Activated CD4-positive, alpha-beta T cell treated with anti-CD3 and anti-CD28 coated beads, Interleukin-2, amount 10 ng/mL, durations not matched to agents 24 days and 14 days (primary cell): ENCODE measurements at regions of chr14 and their contacts with region 1.

Region 1: DNA sequence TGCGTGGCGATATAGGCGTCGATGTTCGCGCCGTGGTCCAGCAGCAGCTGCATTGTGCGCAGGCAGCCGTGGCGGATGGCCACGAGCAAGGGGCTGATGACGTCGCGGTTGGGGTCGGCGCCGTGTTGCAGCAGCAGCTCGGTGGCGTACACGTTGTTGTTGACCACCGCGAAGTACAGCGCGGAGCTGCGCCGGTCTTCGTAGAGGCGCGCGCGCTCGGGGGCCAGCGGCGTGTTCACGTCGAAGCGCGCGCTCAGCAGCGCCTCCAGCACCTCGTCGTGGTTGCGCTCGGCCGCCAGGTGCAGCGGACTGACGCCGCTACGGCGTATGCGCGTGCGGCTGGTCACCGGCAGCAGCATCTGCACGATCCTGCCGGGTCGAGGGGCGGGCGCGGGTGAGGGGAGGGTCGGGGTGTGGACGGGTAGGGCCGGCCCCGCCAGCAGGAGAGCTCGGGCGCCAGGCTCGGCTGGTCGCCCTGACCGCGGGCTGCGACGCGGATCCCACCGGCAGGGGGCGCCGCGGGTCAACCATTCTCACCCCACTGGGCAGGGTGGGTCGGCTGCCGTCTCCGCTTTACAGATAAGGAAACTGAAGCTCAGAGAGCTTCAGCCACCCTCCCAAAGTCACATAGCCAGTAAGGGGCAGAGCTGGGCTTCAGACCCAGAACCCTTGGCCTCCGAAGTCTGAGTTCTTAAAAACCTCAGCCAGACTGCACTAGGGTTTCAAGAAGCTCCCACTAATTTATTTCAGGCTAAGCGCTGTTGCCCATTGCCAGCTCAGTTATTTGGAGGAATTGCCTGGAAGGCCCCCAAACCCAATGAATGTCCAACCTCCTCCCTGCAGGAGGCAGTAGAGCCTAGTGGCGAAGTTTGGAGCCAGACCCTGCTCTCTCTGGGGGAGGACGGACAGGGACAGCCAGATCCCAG is 12.4 kb downstream of the FAM181A start:
- DNase-seq: peak; percentile 98
- H3K4me3 Mint-ChIP-seq: peak overlapping the region; percentile 69
- H3K27ac Mint-ChIP-seq: peak overlapping the region; percentile 79
- H3K4me1 Mint-ChIP-seq: peaks cover 23% of the 10 kb centered on the region
- H3K27me3 Mint-ChIP-seq: no peaks in the 10 kb centered on the region

Region 2: GRCh38 chr14:93857500-93858283 is 81.9 kb before region 1 on chr14:
- intact Hi-C with region 1: no loop called
- DNase-seq: no peak
- H3K4me3 Mint-ChIP-seq: no peak overlapping the region
- H3K27ac Mint-ChIP-seq: no peak overlapping the region
- H3K4me1 Mint-ChIP-seq: no peaks in the 10 kb centered on the region
- H3K27me3 Mint-ChIP-seq: peaks cover 2% of the 10 kb centered on the region

Region 3: GRCh38 chr14:93951635-93952540 is 12.3 kb after region 1 on chr14:
- intact Hi-C with region 1: loop called (anchors 1 kb)
- DNase-seq: no peak
- H3K4me3 Mint-ChIP-seq: no peak overlapping the region
- H3K27ac Mint-ChIP-seq: peak overlapping the region; percentile 55
- H3K4me1 Mint-ChIP-seq: peaks cover 59% of the 10 kb centered on the region
- H3K27me3 Mint-ChIP-seq: no peaks in the 10 kb centered on the region

Region 4: DNA sequence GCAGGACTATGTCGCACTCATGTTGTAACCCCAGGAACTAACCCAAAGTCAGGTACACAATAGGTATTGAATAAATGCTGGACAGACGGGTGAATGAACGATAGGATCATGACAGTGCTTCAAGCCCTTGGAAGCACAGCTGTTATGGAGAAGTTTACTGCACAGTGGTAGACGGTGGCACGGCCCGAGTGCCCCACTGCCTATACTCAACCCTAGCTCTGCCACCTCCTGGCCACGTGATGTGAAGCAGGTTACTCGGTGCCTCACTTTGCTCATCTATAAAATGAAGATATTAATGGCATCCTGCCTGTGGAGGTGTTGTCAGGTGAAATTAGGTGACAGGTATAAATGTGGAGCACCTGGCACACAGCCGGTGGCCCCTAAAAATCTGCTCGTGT is 31.0 kb after region 1 on chr14:
- intact Hi-C with region 1: loop called (anchors 1 kb)
- DNase-seq: peak; percentile 85
- H3K4me3 Mint-ChIP-seq: peak overlapping the region; percentile 83
- H3K27ac Mint-ChIP-seq: peak overlapping the region; percentile 98
- H3K4me1 Mint-ChIP-seq: peaks cover 70% of the 10 kb centered on the region
- H3K27me3 Mint-ChIP-seq: no peaks in the 10 kb centered on the region

Region 5: GRCh38 chr14:94001501-94002396 is 62.2 kb after region 1 on chr14:
- intact Hi-C with region 1: loop called (anchors 1 kb)
- DNase-seq: peak; percentile 88
- H3K4me3 Mint-ChIP-seq: peak overlapping the region; percentile 32
- H3K27ac Mint-ChIP-seq: peak overlapping the region; percentile 77
- H3K4me1 Mint-ChIP-seq: peaks cover 39% of the 10 kb centered on the region
- H3K27me3 Mint-ChIP-seq: no peaks in the 10 kb centered on the region

Region 6: GRCh38 chr14:94088516-94088915 is 148.9 kb after region 1 on chr14:
- intact Hi-C with region 1: no loop called
- DNase-seq: no peak
- H3K4me3 Mint-ChIP-seq: no peak overlapping the region
- H3K27ac Mint-ChIP-seq: no peak overlapping the region
- H3K4me1 Mint-ChIP-seq: peaks cover 2% of the 10 kb centered on the region
- H3K27me3 Mint-ChIP-seq: no peaks in the 10 kb centered on the region

Region 7: DNA sequence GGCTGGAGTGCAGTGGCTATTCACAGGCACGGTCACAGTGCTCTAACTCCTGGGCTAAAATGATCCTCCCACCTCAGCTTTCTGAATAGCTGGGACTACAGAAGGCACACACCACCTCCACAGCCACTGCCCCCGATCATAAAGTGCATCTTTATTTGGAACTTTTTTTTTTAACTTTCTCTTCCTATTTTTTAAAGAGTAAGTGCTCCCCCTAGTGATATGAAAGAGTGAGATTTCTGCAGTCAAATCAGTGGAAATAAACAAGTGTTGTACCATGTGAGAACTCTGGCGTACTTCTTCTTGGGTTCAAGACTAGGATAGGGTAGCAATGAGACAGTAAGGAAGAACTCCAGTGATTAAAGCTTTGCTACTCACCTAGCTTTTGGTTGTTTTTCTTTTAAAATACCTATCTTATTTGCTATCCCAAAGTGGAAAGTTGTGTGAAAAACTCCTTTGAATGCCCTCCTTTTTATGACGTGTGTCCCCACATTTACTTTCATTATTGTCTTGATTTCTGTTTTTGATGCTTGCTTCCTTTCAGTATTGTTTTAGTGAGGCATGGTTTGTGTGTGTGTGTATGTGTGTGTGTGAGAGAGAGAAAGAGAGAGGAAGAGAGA is 241.2 kb after region 1 on chr14:
- intact Hi-C with region 1: loop called (anchors 5 kb)
- DNase-seq: peak; percentile 76
- H3K4me3 Mint-ChIP-seq: peak overlapping the region; percentile 58
- H3K27ac Mint-ChIP-seq: peak overlapping the region; percentile 22
- H3K4me1 Mint-ChIP-seq: peaks cover 11% of the 10 kb centered on the region
- H3K27me3 Mint-ChIP-seq: peaks cover 25% of the 10 kb centered on the region